GM12878 (cell line): ENCODE measurements at regions of chr9 and their contacts with region 1.

Region 1: GRCh38 chr9:30411571-30411970 is 1972.9 kb upstream of the ACO1 start:
- DNase-seq: no peak
- ATAC-seq: peak; percentile 38; the same call in 2 of the 3 replicates
- H3K4me3 ChIP-seq: no peak overlapping the region
- H3K27ac ChIP-seq: no peak overlapping the region
- H3K4me1 ChIP-seq: no peaks in the 10 kb centered on the region
- H3K27me3 ChIP-seq: no peaks in the 10 kb centered on the region
- CTCF ChIP-seq: no peak
- EP300 ChIP-seq: no peak
- POLR2A ChIP-seq: no peak
- RAD21 ChIP-seq: no peak

Region 2: GRCh38 chr9:30258079-30258478 is 153.5 kb before region 1 on chr9:
- CTCF ChIA-PET with region 1: no interaction called
- POLR2A ChIA-PET with region 1: no interaction called
- RAD21 ChIA-PET with region 1: no interaction called
- SMC1A ChIA-PET with region 1: no interaction called
- in situ Hi-C with region 1: no loop called
- intact Hi-C with region 1: no loop called
- DNase-seq: no peak
- ATAC-seq: no peak
- H3K4me3 ChIP-seq: no peak overlapping the region
- H3K27ac ChIP-seq: no peak overlapping the region
- H3K4me1 ChIP-seq: no peaks in the 10 kb centered on the region
- H3K27me3 ChIP-seq: no peaks in the 10 kb centered on the region
- CTCF ChIP-seq: no peak
- EP300 ChIP-seq: no peak
- POLR2A ChIP-seq: no peak
- RAD21 ChIP-seq: no peak

Region 3: GRCh38 chr9:30310711-30311110 is 100.9 kb before region 1 on chr9:
- CTCF ChIA-PET with region 1: no interaction called
- POLR2A ChIA-PET with region 1: no interaction called
- RAD21 ChIA-PET with region 1: no interaction called
- SMC1A ChIA-PET with region 1: no interaction called
- in situ Hi-C with region 1: no loop called
- intact Hi-C with region 1: no loop called
- DNase-seq: no peak
- ATAC-seq: peak; percentile 71
- H3K4me3 ChIP-seq: no peak overlapping the region
- H3K27ac ChIP-seq: no peak overlapping the region
- H3K4me1 ChIP-seq: no peaks in the 10 kb centered on the region
- H3K27me3 ChIP-seq: no peaks in the 10 kb centered on the region
- CTCF ChIP-seq: no peak
- EP300 ChIP-seq: no peak
- POLR2A ChIP-seq: no peak
- RAD21 ChIP-seq: no peak

Region 4: DNA sequence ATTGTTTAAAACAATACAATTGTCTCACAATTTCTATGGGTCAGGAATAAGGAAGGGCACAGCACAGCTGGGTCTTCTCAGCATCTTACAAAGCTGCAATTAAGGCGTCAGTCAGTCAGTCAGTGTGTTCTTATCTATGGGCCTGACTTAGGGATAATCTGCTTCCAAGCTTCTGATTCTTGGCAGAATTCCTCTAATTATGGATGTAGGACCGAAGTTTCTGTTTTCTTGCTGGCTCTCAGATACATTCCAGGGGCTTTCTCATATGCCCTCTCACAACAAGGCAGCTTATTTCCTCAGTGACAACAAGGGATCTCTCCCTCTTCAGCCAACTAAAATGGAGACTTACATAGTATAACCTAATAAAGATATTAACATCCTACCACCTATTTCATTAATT is 47.6 kb after region 1 on chr9:
- CTCF ChIA-PET with region 1: no interaction called
- POLR2A ChIA-PET with region 1: no interaction called
- RAD21 ChIA-PET with region 1: no interaction called
- SMC1A ChIA-PET with region 1: no interaction called
- in situ Hi-C with region 1: loop called (anchors 5 kb)
- intact Hi-C with region 1: no loop called
- DNase-seq: no peak
- ATAC-seq: no peak
- H3K4me3 ChIP-seq: no peak overlapping the region
- H3K27ac ChIP-seq: no peak overlapping the region
- H3K4me1 ChIP-seq: no peaks in the 10 kb centered on the region
- H3K27me3 ChIP-seq: no peaks in the 10 kb centered on the region
- CTCF ChIP-seq: no peak
- EP300 ChIP-seq: no peak
- POLR2A ChIP-seq: no peak
- RAD21 ChIP-seq: no peak